Natural killer cell (primary cell): ENCODE measurements at regions of chr6 and their contacts with region 1.

Region 1: GRCh38 chr6:55131616-55132015 is 42.7 kb upstream of the HCRTR2 start:
- DNase-seq: no peak
- ATAC-seq: no peak
- H3K4me3 ChIP-seq: no peak overlapping the region
- H3K4me3 Mint-ChIP-seq: no peak overlapping the region
- H3K27ac ChIP-seq: no peak overlapping the region
- H3K27ac Mint-ChIP-seq: no peak overlapping the region
- H3K4me1 ChIP-seq: no peaks in the 10 kb centered on the region
- H3K4me1 Mint-ChIP-seq: no peaks in the 10 kb centered on the region
- H3K27me3 ChIP-seq: no peaks in the 10 kb centered on the region
- H3K27me3 Mint-ChIP-seq: peaks cover 0 to 7% of the 10 kb centered on the region in 2 donors
- CTCF ChIP-seq: no peak

Region 2: GRCh38 chr6:55167860-55168259 is 36.2 kb after region 1 on chr6:
- intact Hi-C with region 1: loop called (anchors 1 kb)
- DNase-seq: no peak
- ATAC-seq: no peak
- H3K4me3 ChIP-seq: no peak overlapping the region
- H3K4me3 Mint-ChIP-seq: no peak overlapping the region
- H3K27ac ChIP-seq: no peak overlapping the region
- H3K27ac Mint-ChIP-seq: no peak overlapping the region
- H3K4me1 ChIP-seq: no peaks in the 10 kb centered on the region
- H3K4me1 Mint-ChIP-seq: no peaks in the 10 kb centered on the region
- H3K27me3 ChIP-seq: no peaks in the 10 kb centered on the region
- H3K27me3 Mint-ChIP-seq: peaks cover 0 to 2% of the 10 kb centered on the region in 2 donors
- CTCF ChIP-seq: no peak